ENCODE measurements at regions of chr12 and their contacts with region 1.

Region 1: GRCh38 chr12:109714141-109714912 is 702 bp downstream of the FAM222A start:
- DNase-seq: peak; percentile 68
- H3K4me3 ChIP-seq: peak overlapping the region; percentile 67
- H3K27ac ChIP-seq: no peak overlapping the region
- H3K4me1 ChIP-seq: peaks cover 13% of the 10 kb centered on the region
- CTCF ChIP-seq: peak; percentile 59

Region 2: GRCh38 chr12:109597795-109598427 is 116.4 kb before region 1 on chr12:
- CTCF ChIA-PET with region 1: no interaction called
- POLR2A ChIA-PET with region 1: no interaction called
- intact Hi-C with region 1: loop called (anchors 2 kb)
- DNase-seq: peak; percentile 63
- H3K4me3 ChIP-seq: no peak overlapping the region
- H3K27ac ChIP-seq: no peak overlapping the region
- H3K4me1 ChIP-seq: no peaks in the 10 kb centered on the region
- CTCF ChIP-seq: peak; percentile 92

Region 3: DNA sequence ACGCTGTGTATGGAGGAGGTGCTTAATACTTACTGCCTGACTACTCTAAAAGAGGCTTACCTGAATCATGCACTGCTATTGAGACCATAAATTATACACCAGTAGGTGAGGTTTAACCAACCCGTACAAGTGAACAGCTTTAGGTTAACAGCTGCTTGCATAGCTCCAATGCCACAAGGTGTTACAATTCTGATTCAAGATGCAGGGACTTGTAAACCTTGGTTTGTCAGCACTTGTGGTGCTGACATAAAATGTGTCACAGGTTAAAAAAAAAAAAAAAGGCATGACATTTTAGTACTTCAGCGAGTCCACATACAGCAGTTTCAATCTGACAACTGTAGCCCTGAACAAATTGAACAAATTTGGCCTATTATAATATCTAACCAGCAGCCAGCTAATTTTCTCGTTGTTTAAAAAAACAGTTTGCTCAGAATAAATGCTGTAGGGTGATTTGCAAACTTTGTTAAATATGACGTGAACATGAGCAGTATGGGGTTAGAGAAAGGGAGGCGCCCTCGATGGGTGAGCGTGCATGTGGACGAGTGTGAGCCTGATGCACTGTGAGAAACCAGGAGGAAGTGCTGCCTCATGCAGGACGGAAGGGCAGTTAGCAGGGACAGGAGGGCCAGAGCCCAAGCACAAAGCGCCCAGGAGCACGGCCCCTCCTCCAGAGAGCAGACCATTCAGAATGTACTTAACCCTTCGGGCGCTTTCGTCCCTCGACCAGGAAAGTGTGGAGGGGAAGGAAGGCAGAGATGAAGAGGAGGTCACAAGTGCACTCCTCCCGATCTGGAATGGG is 230.4 kb after region 1 on chr12:
- CTCF ChIA-PET with region 1: no interaction called
- POLR2A ChIA-PET with region 1: no interaction called
- intact Hi-C with region 1: no loop called
- DNase-seq: no peak
- H3K4me3 ChIP-seq: no peak overlapping the region
- H3K27ac ChIP-seq: no peak overlapping the region
- H3K4me1 ChIP-seq: peaks cover 10% of the 10 kb centered on the region
- CTCF ChIP-seq: no peak